ENCODE measurements at regions of chr1 and their contacts with region 1.

Region 1: DNA sequence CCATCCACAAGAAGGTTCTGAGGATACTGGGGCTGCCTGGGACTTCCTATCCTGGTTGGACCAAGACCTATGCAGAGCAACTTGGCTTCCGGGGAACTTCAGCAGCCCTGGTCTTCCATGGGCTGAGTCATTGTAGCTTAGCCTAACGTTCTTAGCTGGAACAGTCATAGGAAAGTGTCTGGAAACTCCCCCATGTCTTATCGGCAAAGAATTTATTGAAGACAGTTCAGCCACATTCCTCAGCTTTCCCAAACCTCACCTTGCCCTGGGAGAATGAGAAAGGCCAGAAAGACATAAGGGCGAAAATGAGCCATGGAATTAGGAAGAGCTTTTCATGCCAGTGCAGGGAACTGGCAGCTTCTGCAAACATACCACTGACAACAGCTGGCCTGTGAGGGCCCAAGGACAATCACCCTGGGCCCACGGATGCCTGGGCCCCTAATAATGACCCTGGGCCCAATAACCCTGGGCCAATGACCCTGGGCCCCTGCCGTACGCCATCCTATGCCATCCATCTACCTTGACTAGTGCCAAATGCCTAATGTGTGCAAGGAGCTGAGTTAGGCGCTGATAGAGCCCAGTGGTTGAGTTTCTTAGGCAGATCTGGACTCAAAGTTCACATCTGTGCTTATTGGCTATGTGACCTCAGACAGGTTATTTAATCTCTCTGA is 114.4 kb upstream of the GADD45A start:
- DNase-seq: no peak
- H3K4me3 ChIP-seq: no peak overlapping the region
- H3K27ac ChIP-seq: no peak overlapping the region
- H3K4me1 ChIP-seq: no peaks in the 10 kb centered on the region
- H3K27me3 ChIP-seq: no peaks in the 10 kb centered on the region
- CTCF ChIP-seq: no peak
- EP300 ChIP-seq: no peak
- POLR2A ChIP-seq: no peak
- RAD21 ChIP-seq: no peak

Region 2: GRCh38 chr1:67582625-67583461 is 12.2 kb after region 1 on chr1:
- CTCF ChIA-PET with region 1: interaction called, 11 read pairs
- POLR2A ChIA-PET with region 1: no interaction called
- DNase-seq: no peak
- H3K4me3 ChIP-seq: no peak overlapping the region
- H3K27ac ChIP-seq: no peak overlapping the region
- H3K4me1 ChIP-seq: 0 out of 7 replicates have a peak, but pooled peaks cover 0 to 4% (median 0%) of the 10 kb centered on the region in 4 experiments
- H3K27me3 ChIP-seq: peaks cover 0 to 4% (median 0%) of the 10 kb centered on the region in 4 experiments; a peak in 2 of 7 replicates
- CTCF ChIP-seq: no peak
- EP300 ChIP-seq: no peak
- POLR2A ChIP-seq: no peak
- RAD21 ChIP-seq: no peak